Mammary epithelial cell (primary cell): ENCODE measurements at regions of chr5 and their contacts with region 1.

Region 1: DNA sequence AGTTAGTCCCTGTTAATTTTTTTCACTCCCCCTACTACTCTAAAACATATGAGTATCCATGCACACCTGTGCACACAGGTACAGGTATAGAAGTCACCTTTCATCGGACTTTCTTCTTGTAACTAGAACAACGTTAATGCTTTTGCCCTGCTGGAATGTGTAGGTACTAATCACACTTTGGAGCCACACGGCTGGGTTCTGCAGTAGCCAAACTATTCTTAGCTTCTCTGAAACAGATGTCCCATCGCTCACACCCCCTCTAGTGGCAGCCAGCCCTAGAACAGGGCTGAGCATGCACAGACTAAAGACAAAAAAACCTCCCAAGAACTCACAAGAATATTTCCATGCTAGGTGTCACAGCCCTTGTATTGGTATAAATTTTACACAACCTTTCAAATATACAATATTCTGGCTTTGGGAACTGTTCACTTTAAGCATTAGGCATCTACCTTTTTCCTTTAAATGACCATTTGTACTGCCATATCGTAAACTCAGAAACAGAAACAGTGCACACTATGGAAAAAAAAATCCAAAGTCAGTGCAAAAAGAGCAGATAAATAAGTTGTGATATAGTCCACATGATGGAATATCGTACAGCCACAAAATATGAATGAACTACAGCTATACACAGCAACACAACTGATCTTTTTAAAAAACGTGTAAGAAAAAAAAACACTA is 64.0 kb downstream of the RETREG1 start:
- DNase-seq: peak; percentile 62
- H3K4me3 ChIP-seq: no peak overlapping the region
- H3K27ac ChIP-seq: no peak overlapping the region
- H3K4me1 ChIP-seq: no peaks in the 10 kb centered on the region
- H3K27me3 ChIP-seq: no peaks in the 10 kb centered on the region
- CTCF ChIP-seq: peak; percentile 91 to 97

Region 2: GRCh38 chr5:16160706-16161105 is 392.1 kb before region 1 on chr5:
- CTCF ChIA-PET with region 1: no interaction called
- dilution Hi-C with region 1: no loop called
- in situ Hi-C with region 1: no loop called
- intact Hi-C with region 1: loop called (anchors 2 kb)
- DNase-seq: peak; percentile 41
- H3K4me3 ChIP-seq: no peak overlapping the region
- H3K27ac ChIP-seq: no peak overlapping the region
- H3K4me1 ChIP-seq: no peaks in the 10 kb centered on the region
- H3K27me3 ChIP-seq: no peaks in the 10 kb centered on the region
- CTCF ChIP-seq: peak; percentile 71 to 85

Region 3: DNA sequence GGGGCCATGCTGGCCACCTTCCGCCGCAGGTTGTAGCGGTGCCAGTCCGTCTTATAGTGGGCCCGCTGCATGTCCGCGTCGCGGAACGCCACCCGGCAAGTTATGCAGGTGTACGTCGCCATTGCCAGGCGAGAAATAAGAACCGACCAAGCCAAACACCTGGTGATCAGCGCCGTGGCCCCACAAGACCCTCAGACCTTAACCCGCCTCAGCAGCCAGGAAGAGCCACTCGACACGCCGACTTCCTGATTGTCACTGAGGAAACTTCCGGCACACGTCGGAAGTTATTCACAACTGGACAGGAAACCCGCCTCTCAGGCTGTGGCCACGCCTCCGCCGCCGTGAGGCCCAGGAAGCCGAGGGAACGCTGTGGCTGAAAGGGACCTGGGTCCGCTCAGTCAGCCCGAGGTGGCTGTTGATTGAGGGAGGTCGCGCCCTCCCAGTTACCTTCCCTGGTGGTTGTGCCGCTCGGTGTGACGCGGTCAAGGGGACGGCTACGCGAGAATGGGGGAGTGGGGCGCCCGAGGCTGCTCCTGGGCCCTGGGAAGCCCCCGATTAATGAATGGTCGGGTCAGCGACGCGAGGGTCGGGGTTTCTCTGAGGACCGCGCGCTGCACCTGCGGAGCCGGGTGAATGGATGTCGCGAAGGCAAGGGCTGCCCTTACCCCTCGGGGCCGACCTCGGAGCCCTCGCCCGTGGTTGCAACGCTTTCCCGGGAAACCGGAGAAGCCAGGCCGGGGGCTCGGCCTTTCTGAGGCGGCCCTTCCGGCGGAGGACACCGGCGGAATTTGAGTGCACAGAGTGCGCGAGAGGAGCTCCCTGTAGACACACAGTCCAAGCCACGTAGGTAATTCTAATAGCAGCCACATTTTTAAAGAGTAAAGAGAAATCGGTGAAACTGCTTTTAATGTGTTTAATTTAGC is 87.0 kb before region 1 on chr5 and contains the start of gene ZNF622:
- CTCF ChIA-PET with region 1: interaction called, 5 read pairs
- dilution Hi-C with region 1: no loop called
- in situ Hi-C with region 1: no loop called
- intact Hi-C with region 1: loop called (anchors 2 kb)
- DNase-seq: peak; percentile 89
- H3K4me3 ChIP-seq: peak within 1 kb of the TSS; percentile 78 to 98 (median 87)
- H3K27ac ChIP-seq: peak within 1 kb of the TSS; percentile 83
- H3K4me1 ChIP-seq: peaks cover 33% of the 10 kb centered on the region
- H3K27me3 ChIP-seq: no peaks in the 10 kb centered on the region
- CTCF ChIP-seq: no peak
- total RNA-seq, gene ZNF622: 32.2 to 32.3 TPM

Region 4: GRCh38 chr5:16508730-16509531 is 43.9 kb before region 1 on chr5:
- CTCF ChIA-PET with region 1: no interaction called
- dilution Hi-C with region 1: no loop called
- in situ Hi-C with region 1: no loop called
- intact Hi-C with region 1: loop called (anchors 1 kb)
- DNase-seq: peak; percentile 89
- H3K4me3 ChIP-seq: peak overlapping the region; percentile 47 to 72 (median 51)
- H3K27ac ChIP-seq: peak overlapping the region; percentile 70
- H3K4me1 ChIP-seq: peaks cover 16% of the 10 kb centered on the region
- H3K27me3 ChIP-seq: no peaks in the 10 kb centered on the region
- CTCF ChIP-seq: no peak

Region 5: DNA sequence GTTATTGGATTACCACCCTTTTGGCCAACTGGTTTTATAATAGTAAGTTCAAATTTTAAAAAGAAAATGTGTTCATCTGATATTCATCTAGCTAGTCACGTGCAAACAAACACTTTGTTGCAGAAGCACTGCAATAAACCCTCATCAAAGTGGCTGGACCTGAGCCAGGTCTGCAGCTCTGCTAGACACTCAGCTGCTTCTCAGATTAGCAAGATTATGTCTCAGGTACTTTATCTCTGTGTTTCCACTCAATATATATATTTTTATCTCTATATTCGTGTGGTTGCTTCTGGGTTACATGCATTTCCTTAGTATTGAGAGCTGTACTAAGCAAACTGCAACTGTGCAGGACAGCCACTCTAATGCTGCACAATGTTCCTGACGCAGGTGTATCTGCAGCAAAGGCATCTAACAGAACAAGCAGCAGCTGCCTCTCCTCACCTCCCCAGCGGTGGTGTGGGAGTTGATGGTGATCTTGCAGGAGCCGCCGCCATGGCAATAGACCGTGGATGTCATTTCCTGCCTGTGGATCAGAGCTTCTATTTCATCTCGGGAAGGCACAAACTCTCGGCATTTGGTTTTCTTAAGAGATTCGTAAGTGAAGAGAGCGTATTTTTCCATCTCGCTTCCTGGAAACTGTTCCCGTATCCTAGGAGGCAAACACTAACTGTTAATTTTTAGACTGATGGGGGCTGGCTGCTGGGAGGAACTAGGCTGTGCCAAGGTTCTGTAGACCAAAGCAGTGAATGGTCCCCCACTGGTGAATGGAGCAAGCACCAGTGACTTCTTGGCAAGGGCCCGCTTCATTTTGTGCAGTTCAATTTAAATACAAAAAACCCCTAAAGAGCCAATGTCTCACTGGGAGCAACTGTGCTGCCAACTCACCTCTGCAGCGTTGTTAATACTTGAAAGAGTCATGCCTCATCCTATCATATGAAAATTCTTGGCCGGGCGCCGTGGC is 120.7 kb after region 1 on chr5:
- CTCF ChIA-PET with region 1: no interaction called
- dilution Hi-C with region 1: no loop called
- in situ Hi-C with region 1: loop called in 1 of 2 experiments (anchors 5 kb)
- intact Hi-C with region 1: no loop called
- DNase-seq: peak; percentile 32
- H3K4me3 ChIP-seq: no peak overlapping the region
- H3K27ac ChIP-seq: no peak overlapping the region
- H3K4me1 ChIP-seq: peaks cover 7% of the 10 kb centered on the region
- H3K27me3 ChIP-seq: no peaks in the 10 kb centered on the region
- CTCF ChIP-seq: no peak